ENCODE measurements at regions of chr9 and their contacts with region 1.

Region 1: DNA sequence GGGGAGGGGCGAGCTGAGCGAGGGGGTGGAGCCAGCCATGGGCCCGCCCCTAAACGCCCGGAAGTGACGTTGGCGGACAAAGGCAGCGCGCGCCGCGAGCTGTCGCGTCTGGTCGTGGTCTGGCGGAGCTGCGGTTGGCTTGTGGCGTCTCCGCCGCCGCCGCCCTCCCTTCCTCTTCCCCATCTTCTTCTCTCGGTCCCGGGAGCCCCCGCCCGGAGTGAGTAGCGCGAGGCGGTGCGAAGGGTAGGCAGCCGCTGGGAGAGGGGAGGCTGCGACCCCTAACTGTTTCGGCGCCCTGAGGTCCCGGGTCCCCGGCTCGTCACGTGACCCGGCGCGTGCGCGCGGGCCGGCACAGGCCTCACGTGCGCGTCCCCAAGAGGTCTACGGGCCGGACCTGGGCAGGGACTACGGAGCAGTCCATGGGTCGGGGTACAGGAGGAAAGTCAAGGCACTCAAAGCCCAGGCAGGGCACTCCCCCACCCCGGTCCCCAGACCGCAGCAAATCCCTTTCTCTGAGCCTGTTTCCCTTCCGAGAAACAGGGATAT is at the start of gene NTMT1:
- DNase-seq: peak; percentile 92
- ATAC-seq: peak; percentile 81
- H3K4me3 Mint-ChIP-seq: peak within 1 kb of the TSS; percentile 89
- H3K27ac Mint-ChIP-seq: peak within 1 kb of the TSS; percentile 88
- H3K4me1 Mint-ChIP-seq: peaks cover 54% of the 10 kb centered on the region
- H3K27me3 Mint-ChIP-seq: peaks cover 7% of the 10 kb centered on the region
- CTCF ChIP-seq: no peak
- total RNA-seq, gene NTMT1: 33.1 and 40.1 TPM in 2 replicates

Region 2: GRCh38 chr9:129080602-129081387 is 545.4 kb before region 1 on chr9 and contains the start of gene DOLPP1:
- CTCF ChIA-PET with region 1: no interaction called
- POLR2A ChIA-PET with region 1: interaction called, 5 read pairs
- intact Hi-C with region 1: loop called (anchors 1 kb)
- DNase-seq: peak; percentile 97
- ATAC-seq: peak; percentile 95
- H3K4me3 Mint-ChIP-seq: peak within 1 kb of the TSS; percentile 87
- H3K27ac Mint-ChIP-seq: peak within 1 kb of the TSS; percentile 76
- H3K4me1 Mint-ChIP-seq: peaks cover 29% of the 10 kb centered on the region
- H3K27me3 Mint-ChIP-seq: no peaks in the 10 kb centered on the region
- CTCF ChIP-seq: no peak
- total RNA-seq, gene DOLPP1: 10.9 and 11.3 TPM in 2 replicates

Region 3: GRCh38 chr9:129131300-129132145 is 494.6 kb before region 1 on chr9:
- CTCF ChIA-PET with region 1: interaction called, 72 read pairs
- POLR2A ChIA-PET with region 1: interaction called, 11 read pairs
- intact Hi-C with region 1: loop called (anchors 1 kb)
- DNase-seq: peak; percentile 77
- ATAC-seq: peak; percentile 100
- H3K4me3 Mint-ChIP-seq: no peak overlapping the region
- H3K27ac Mint-ChIP-seq: no peak overlapping the region
- H3K4me1 Mint-ChIP-seq: peaks cover 10% of the 10 kb centered on the region
- H3K27me3 Mint-ChIP-seq: no peaks in the 10 kb centered on the region
- CTCF ChIP-seq: peak; percentile 83

Region 4: GRCh38 chr9:129610473-129611301 is 15.5 kb before region 1 on chr9:
- CTCF ChIA-PET with region 1: interaction called, 18 read pairs
- POLR2A ChIA-PET with region 1: interaction called, 7 read pairs
- intact Hi-C with region 1: loop called (anchors 1 kb)
- DNase-seq: peak; percentile 75
- ATAC-seq: peak; percentile 82
- H3K4me3 Mint-ChIP-seq: peak overlapping the region; percentile 81
- H3K27ac Mint-ChIP-seq: peak overlapping the region; percentile 41
- H3K4me1 Mint-ChIP-seq: peaks cover 24% of the 10 kb centered on the region
- H3K27me3 Mint-ChIP-seq: peaks cover 2% of the 10 kb centered on the region
- CTCF ChIP-seq: peak; percentile 37

Region 5: DNA sequence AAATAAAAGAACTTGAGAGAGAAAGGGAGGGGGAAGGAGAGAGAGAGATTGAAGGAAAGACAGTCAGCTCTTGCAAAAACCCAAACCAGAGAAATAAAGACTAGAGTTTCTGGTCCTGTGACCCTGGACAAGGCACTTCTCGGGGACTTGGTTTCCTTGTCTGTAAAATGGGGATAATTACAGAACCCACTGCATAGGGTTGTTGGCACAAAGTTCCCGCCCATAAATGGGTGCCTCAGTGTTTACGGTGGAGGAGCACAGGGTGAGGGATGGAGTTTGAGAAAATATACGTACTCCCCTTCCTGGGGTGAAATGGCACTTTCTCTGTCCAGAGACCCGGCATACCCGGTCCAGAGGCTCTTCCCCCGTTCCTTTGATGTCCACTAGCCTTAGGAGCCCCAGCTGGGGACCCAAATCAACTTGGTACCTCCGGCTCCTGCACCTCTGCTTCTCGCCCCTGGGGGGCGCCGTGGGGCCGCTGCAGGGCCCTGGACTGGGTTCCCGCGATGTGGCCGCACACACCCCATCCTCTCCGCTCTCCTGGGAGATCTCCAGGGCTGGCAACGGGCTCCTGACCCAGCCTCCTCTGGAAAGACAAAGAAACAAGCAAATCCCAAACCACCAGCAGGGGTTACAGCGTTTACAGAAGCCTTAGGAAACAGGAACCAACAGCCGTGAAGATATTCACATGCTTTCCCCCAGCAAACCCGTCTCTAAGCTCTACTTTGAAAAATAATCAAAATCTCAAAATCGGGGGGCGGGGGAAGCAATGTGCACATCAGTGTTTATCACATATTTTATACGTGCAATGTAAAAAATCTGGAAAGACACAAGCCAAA is 100.4 kb after region 1 on chr9:
- CTCF ChIA-PET with region 1: no interaction called
- POLR2A ChIA-PET with region 1: interaction called, 13 read pairs
- intact Hi-C with region 1: no loop called
- DNase-seq: peak; percentile 40
- ATAC-seq: peak; percentile 73
- H3K4me3 Mint-ChIP-seq: no peak overlapping the region
- H3K27ac Mint-ChIP-seq: no peak overlapping the region
- H3K4me1 Mint-ChIP-seq: no peaks in the 10 kb centered on the region
- H3K27me3 Mint-ChIP-seq: peaks cover 14% of the 10 kb centered on the region
- CTCF ChIP-seq: no peak